ENCODE measurements at regions of chr11 and their contacts with region 1.

Region 1: DNA sequence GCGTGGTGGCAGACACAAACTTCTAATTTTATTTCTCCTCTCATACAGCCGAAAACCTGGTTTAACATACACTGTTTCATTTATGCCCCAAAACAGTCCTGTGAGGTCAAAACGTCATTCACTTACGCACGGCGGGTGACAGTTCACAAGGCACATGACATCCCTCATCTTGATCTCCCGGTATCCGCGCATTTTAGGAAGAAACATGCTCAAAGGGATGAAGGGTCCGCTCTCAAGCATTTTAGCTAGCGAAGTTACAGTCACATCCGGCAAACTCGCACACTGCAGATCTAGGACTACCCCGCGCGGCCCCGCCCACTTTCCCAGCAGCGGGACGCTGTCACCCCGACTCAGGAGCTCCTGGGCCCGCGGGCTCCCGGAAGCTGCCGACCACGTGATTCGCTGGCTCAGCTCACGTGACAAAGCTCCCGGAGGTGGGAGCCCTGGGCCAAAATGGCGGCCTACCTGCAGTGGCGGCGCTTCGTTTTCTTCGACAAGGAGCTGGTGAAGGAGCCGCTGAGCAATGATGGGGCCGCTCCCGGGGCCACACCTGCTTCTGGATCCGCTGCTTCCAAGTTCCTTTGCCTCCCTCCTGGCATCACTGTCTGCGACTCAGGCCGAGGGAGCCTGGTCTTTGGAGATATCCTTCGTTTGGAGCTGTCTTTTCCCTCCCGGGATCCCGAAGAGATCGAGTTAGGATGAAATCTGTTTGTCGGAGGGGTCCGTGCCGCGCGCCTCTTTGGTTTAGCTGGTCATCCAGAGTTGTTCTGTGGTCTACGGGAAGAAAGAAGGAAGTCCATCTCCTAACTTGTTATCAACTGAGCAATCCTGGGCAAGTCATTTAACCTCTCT is at the start of gene VPS11:
- DNase-seq: peak; percentile 97 to 98 (median 97)
- H3K4me3 ChIP-seq: peak within 1 kb of the TSS; percentile 87 to 99
- H3K4me3 Mint-ChIP-seq: peak within 1 kb of the TSS; percentile 91 to 99 (median 94)
- H3K27ac ChIP-seq: peak within 1 kb of the TSS; percentile 88
- H3K27ac Mint-ChIP-seq: peak within 1 kb of the TSS; percentile 92 to 100 (median 98)
- H3K4me1 ChIP-seq: peaks cover 34% of the 10 kb centered on the region
- H3K4me1 Mint-ChIP-seq: peaks cover 23 to 43% (median 36%) of the 10 kb centered on the region in 4 donors
- H3K27me3 ChIP-seq: no peaks in the 10 kb centered on the region
- H3K27me3 Mint-ChIP-seq: no peaks in the 10 kb centered on the region
- total RNA-seq, gene VPS11: 56.2 to 61.2 TPM

Region 2: DNA sequence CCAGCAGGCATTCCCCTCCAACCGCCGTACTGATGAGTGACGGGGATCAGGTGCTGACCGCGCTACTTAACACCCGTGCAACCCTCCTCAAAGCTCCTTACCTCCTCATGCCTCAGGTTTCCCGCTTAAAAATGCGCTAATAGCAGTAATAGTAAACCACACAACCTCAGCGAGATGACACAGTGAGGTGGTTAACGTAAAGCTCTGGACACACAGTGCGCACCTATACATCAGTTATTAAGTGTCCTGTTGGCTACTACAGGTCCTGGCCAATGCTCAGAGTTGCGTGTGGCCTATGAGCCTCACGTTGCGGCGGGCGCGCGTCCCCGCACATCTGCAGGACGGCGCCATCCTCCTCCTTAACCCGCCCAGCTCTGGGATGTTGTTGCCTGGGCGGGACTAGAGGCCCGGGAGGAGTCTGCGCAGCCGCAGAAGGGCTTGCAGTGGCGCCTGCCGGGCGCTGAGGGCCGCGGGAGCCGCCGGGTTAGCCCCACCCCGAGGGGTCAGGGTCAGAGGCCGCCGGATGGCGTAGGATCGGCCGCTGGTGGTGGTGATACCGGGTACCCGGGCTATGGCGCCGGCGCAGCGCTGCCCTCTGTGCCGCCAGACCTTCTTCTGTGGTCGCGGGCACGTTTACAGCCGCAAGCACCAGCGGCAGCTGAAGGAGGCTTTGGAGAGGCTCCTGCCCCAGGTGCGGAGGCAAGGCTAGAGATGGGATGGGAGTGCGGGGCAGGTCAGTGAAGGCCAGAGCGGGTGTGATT is 69.8 kb before region 1 on chr11 and contains the start of gene CENATAC:
- CTCF ChIA-PET with region 1: no interaction called
- POLR2A ChIA-PET with region 1: interaction called, 20 read pairs
- intact Hi-C with region 1: no loop called
- DNase-seq: peak; percentile 94 to 96 (median 95)
- H3K4me3 ChIP-seq: peak within 1 kb of the TSS; percentile 87 to 99
- H3K4me3 Mint-ChIP-seq: peak within 1 kb of the TSS; percentile 87 to 99 (median 98)
- H3K27ac ChIP-seq: peak within 1 kb of the TSS; percentile 75
- H3K27ac Mint-ChIP-seq: peak within 1 kb of the TSS; percentile 90 to 99 (median 95)
- H3K4me1 ChIP-seq: peaks cover 24% of the 10 kb centered on the region
- H3K4me1 Mint-ChIP-seq: peaks cover 18 to 52% (median 34%) of the 10 kb centered on the region in 4 donors
- H3K27me3 ChIP-seq: no peaks in the 10 kb centered on the region
- H3K27me3 Mint-ChIP-seq: no peaks in the 10 kb centered on the region
- total RNA-seq, gene CENATAC: 109 to 114 TPM

Region 3: DNA sequence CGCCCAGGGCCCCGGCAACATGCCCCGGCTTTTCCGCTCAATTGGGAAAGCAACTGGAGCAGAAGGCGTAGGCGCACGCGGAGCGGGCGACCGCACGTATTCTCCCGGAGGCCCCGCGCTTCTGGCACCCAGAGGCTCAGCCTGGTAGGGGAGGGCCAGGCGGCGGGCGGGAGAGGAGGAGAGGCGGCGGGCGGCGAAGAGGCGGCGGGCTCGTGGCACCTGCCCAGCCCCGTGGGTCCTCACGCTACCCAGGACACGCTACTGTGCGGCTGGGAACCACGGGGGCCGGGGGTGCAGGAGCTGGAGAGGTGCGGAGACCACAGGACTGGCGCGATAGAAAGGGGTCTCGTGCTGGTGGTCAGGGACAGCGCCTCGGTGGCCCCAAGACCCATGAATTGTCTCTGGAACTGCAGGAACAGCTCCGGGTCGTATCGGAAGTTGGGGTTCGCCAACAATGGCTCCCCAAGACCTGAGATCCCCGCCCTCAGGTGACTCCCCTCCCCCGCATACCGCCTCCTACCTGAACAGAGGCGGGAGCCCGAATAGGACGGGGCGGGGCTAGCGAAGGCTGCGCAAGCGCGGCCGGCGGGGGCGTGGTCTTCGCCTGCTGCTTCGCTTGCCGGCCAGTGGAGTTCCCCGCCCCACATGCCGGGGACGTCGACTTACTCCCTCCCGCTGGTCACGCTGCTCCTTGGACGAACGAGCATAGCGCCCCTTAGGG is 37.1 kb before region 1 on chr11 and contains the start of gene SLC37A4:
- CTCF ChIA-PET with region 1: interaction called, 5 read pairs
- POLR2A ChIA-PET with region 1: interaction called, 12 read pairs
- intact Hi-C with region 1: loop called (anchors 2 kb)
- DNase-seq: peak; percentile 98 to 99 (median 99)
- H3K4me3 ChIP-seq: peak within 1 kb of the TSS; percentile 61 to 91
- H3K4me3 Mint-ChIP-seq: peak within 1 kb of the TSS; percentile 78 to 91 (median 82)
- H3K27ac ChIP-seq: peak within 1 kb of the TSS; percentile 76
- H3K27ac Mint-ChIP-seq: peak within 1 kb of the TSS; percentile 64 to 95 (median 93)
- H3K4me1 ChIP-seq: peaks cover 19% of the 10 kb centered on the region
- H3K4me1 Mint-ChIP-seq: peaks cover 14 to 40% (median 19%) of the 10 kb centered on the region in 4 donors
- H3K27me3 ChIP-seq: no peaks in the 10 kb centered on the region
- H3K27me3 Mint-ChIP-seq: no peaks in the 10 kb centered on the region
- total RNA-seq, gene SLC37A4: 14.6 to 14.8 TPM

Region 4: DNA sequence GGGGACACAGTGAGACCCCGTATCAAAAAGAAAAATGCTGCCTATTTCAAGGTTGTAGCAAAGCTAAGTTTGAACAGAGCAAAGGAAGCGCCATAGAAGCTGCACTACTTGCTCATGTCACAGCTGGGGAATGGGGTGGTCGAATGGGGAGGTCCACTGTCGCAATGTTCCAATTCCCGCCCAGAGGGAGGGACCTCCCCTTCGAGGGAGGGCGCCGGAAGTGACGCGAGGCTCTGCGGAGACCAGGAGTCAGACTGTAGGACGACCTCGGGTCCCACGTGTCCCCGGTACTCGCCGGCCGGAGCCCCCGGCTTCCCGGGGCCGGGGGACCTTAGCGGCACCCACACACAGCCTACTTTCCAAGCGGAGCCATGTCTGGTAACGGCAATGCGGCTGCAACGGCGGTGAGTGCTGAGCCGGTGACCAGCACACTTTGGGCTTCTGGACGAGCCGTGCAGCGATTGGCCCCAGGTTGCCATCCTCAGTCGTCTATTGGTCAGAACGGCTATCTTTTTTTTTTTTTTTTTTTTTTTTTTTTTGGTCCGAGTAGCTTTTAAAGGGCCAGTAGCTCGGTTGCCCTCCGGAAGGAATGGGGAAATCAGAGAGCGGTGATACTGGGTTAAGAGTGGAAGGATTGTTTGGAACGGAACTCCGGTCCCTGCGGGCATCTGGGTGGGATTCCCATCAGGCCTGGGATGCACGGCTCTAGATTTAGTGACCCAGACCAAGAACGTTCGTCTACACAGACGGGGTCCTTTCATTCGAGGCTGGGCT is 17.3 kb after region 1 on chr11 and contains the start of gene HMBS:
- CTCF ChIA-PET with region 1: interaction called, 4 read pairs
- POLR2A ChIA-PET with region 1: interaction called, 45 read pairs
- intact Hi-C with region 1: loop called (anchors 1 kb)
- DNase-seq: peak; percentile 88 to 93 (median 89)
- H3K4me3 ChIP-seq: peak within 1 kb of the TSS; percentile 83 to 90
- H3K4me3 Mint-ChIP-seq: peak within 1 kb of the TSS; percentile 92 to 96 (median 94)
- H3K27ac ChIP-seq: peak within 1 kb of the TSS; percentile 76
- H3K27ac Mint-ChIP-seq: peak within 1 kb of the TSS; percentile 93 to 98 (median 96)
- H3K4me1 ChIP-seq: peaks cover 13% of the 10 kb centered on the region
- H3K4me1 Mint-ChIP-seq: peaks cover 9 to 19% (median 14%) of the 10 kb centered on the region in 4 donors
- H3K27me3 ChIP-seq: no peaks in the 10 kb centered on the region
- H3K27me3 Mint-ChIP-seq: no peaks in the 10 kb centered on the region
- total RNA-seq, gene HMBS: 5.1 to 5.8 TPM

Region 5: DNA sequence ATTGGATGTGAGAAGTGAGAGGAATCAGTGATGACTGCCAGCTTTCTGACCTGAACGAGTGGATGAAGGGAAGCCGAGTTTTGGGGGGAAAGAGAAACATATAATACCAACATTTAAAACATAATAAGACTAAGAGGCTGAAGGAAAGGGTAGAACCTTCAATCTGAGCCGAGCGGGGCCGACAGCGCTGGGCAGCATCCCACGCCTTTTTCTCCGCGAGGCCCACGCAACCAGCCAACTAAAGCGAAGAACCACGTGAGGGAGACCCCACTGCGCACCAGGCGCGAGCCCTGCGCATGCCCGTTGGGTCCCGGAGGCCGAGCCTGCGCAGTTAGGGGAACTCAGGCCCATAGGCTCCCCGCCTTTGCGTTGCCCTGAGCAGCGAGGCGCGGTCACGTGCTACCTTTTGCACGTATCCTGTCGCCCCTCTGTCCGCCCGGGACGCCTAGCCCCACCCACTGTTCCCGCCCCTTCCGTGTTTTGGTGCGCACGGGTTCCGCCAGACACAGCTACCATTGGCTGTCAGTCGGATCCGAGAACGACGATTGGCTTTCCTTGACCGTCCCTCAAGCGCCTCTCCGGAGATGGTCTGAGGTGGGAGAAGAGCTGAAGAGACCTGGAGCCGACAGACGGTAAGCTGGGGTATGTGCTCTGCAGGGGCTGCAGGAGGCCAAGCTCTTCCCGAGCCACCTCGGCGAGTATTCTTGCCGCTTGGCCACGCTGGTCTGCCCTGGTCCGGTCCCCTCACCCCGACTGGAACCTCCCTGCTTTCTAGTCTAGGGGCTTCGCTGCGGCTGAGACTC is 53.6 kb after region 1 on chr11 and contains the start of gene HINFP:
- CTCF ChIA-PET with region 1: interaction called, 5 read pairs
- POLR2A ChIA-PET with region 1: interaction called, 24 read pairs
- intact Hi-C with region 1: no loop called
- DNase-seq: peak; percentile 97 to 100 (median 99)
- H3K4me3 ChIP-seq: peak within 1 kb of the TSS; percentile 78 to 90
- H3K4me3 Mint-ChIP-seq: peak within 1 kb of the TSS; percentile 88 to 99 (median 95)
- H3K27ac ChIP-seq: peak within 1 kb of the TSS; percentile 85
- H3K27ac Mint-ChIP-seq: peak within 1 kb of the TSS; percentile 90 to 98 (median 94)
- H3K4me1 ChIP-seq: peaks cover 33% of the 10 kb centered on the region
- H3K4me1 Mint-ChIP-seq: peaks cover 24 to 51% (median 28%) of the 10 kb centered on the region in 4 donors
- H3K27me3 ChIP-seq: no peaks in the 10 kb centered on the region
- H3K27me3 Mint-ChIP-seq: no peaks in the 10 kb centered on the region
- total RNA-seq, gene HINFP: 70.8 to 75.3 TPM

Region 6: DNA sequence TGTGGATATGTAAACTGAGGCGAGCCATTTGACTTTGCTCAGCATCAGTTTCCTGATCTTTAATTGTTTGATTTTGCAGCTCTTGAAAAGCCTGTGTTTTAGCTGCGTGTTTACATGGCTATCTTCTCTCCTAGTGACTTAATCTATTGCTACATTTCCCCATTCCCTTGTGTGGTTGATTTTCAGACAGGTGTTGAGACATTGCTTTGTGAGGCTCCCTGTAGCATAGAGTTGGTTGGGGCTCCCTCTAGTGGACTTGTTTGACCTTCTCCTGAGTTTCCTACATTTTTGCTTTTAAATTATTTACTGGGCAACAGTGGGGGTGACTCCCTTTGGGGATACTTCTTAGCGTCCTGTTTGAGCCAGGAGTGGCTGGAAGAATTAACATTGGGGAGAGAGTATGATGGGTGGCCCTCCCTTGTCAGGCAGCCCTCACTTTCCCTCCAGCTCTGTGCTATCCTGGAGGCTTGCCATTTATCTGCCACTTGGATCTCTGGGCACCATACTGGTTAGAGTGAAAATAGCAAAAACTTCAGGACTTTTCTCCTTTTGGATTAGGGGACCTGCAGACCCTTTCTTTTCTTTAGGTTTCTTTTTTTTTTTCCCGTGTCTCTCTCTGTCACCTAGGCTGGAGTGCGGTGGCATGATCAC is 129.4 kb after region 1 on chr11:
- CTCF ChIA-PET with region 1: interaction called, 15 read pairs
- POLR2A ChIA-PET with region 1: interaction called, 3 read pairs
- intact Hi-C with region 1: loop called (anchors 1 kb)
- DNase-seq: peak; percentile 73 to 79 (median 76)
- H3K4me3 ChIP-seq: no peak overlapping the region
- H3K4me3 Mint-ChIP-seq: peak overlapping the region in 1 of 8 donors; percentile 47
- H3K27ac ChIP-seq: no peak overlapping the region
- H3K27ac Mint-ChIP-seq: peak overlapping the region in 1 of 7 donors; percentile 43
- H3K4me1 ChIP-seq: no peaks in the 10 kb centered on the region
- H3K4me1 Mint-ChIP-seq: peaks cover 0 to 6% (median 3%) of the 10 kb centered on the region in 4 donors
- H3K27me3 ChIP-seq: no peaks in the 10 kb centered on the region
- H3K27me3 Mint-ChIP-seq: peaks cover 0 to 1% of the 10 kb centered on the region in 2 donors

Region 7: DNA sequence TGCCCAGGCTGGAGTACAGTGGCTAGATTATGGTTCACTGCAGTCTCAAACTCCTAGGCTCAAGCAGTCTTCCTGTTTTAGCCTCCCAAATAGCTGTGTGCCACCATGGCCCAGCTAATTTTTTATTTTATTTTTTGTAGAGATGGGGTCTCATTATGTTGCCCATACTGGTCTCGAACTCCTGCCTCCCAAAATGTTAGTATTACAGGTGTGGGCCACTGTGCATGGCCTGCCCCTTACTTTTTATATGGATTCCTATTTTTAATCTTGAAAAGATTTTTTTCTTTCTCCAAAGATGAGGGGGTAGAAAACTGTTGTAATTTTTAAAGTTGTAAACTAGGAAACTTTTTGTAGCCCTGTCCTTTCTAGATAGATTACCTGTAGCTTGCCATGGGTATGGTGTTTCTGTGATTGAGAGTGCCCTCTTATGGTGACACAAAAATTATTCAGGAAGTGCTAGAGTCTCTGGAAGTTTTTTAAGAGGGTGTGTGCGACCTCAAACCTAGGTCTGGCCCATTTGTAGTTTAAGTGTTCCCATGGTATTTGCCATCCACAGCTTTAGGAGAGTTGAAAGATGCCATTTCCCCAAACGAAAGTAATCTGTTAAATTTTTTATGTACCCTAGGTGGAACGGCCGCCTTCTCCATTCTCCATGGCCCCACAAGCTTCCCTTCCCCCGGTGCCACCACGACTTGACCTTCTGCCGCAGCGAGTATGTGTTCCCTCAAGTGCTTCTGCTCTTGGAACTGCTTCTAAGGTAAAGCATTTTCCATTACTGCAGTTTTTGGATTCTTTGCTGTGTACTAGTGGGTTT is 217.0 kb after region 1 on chr11:
- CTCF ChIA-PET with region 1: interaction called, 18 read pairs
- POLR2A ChIA-PET with region 1: no interaction called
- intact Hi-C with region 1: loop called (anchors 5 kb)
- DNase-seq: peak in 4 of 5 donors; percentile 62 to 64 (median 62)
- H3K4me3 ChIP-seq: no peak overlapping the region
- H3K4me3 Mint-ChIP-seq: peak overlapping the region in 1 of 8 donors; percentile 20
- H3K27ac ChIP-seq: no peak overlapping the region
- H3K27ac Mint-ChIP-seq: peak overlapping the region in 6 of 7 donors; percentile 30 to 87 (median 76)
- H3K4me1 ChIP-seq: peaks cover 9% of the 10 kb centered on the region
- H3K4me1 Mint-ChIP-seq: peaks cover 17 to 30% (median 21%) of the 10 kb centered on the region in 4 donors
- H3K27me3 ChIP-seq: no peaks in the 10 kb centered on the region
- H3K27me3 Mint-ChIP-seq: no peaks in the 10 kb centered on the region

Region 8: GRCh38 chr11:119361056-119361787 is 293.6 kb after region 1 on chr11:
- CTCF ChIA-PET with region 1: no interaction called
- POLR2A ChIA-PET with region 1: no interaction called
- intact Hi-C with region 1: no loop called
- DNase-seq: no peak
- H3K4me3 ChIP-seq: no peak overlapping the region
- H3K4me3 Mint-ChIP-seq: no peak overlapping the region
- H3K27ac ChIP-seq: no peak overlapping the region
- H3K27ac Mint-ChIP-seq: peak overlapping the region in 1 of 7 donors; percentile 63
- H3K4me1 ChIP-seq: peaks cover 7% of the 10 kb centered on the region
- H3K4me1 Mint-ChIP-seq: peaks cover 6 to 30% (median 12%) of the 10 kb centered on the region in 4 donors
- H3K27me3 ChIP-seq: peaks cover 14% of the 10 kb centered on the region
- H3K27me3 Mint-ChIP-seq: peaks cover 13 to 25% of the 10 kb centered on the region in 2 donors